K562 (cell line): ENCODE measurements at regions of chr1 and their contacts with region 1.

Region 1: DNA sequence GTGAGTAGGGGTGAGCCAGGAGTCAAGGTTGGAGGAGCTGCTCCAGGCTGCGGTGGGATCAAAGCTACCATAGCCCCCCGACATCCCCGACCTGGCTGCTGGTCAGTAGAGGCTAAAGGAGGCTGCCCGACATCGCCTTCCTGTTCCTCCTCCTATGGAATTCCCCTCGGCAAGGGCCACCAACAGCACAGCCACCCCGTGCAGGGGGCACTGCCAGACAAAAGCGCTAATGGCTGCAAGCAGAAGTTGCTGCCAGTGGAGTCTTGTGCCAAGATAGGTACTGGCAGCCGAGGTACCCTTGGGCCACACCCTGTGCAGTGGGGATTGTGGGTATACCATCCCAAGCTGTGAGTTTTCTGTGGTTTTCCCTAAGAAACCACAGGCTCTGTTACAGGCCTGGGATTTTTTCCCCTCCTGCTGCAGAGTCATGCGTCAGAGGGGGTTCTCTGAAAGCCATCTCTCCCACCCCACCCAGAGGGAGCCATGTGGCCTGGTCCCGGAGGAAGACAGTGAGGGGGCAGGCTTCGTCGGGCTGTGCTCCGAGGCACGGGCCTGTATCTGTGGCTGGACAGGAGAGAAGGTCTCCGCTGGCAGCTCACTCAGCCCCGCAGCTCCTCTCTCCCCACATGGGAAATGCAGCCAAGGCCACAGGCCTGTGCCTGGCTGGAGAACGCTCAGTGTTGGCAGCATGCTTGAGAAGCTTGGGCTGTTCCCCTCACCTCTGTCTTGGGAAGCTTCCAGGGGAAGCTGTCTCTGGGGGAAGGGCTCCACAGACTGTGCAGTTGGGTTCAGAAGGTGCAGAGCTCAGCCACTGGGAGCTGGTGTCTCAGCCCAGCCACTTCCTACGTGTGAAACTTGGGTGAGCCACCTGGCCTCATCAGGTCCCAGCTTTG is 42.5 kb downstream of the NEK2 start:
- DNase-seq: no peak
- ATAC-seq: peak; percentile 6
- H3K4me3 ChIP-seq: no peak overlapping the region
- H3K27ac ChIP-seq: peak overlapping the region; percentile 54; the same call in 2 of the 3 replicates
- H3K4me1 ChIP-seq: peaks cover 35 to 42% of the 10 kb centered on the region in 2 experiments
- H3K27me3 ChIP-seq: no peaks in the 10 kb centered on the region
- CTCF ChIP-seq: no peak
- EP300 ChIP-seq: no peak
- POLR2A ChIP-seq: no peak
- RAD21 ChIP-seq: no peak

Region 2: DNA sequence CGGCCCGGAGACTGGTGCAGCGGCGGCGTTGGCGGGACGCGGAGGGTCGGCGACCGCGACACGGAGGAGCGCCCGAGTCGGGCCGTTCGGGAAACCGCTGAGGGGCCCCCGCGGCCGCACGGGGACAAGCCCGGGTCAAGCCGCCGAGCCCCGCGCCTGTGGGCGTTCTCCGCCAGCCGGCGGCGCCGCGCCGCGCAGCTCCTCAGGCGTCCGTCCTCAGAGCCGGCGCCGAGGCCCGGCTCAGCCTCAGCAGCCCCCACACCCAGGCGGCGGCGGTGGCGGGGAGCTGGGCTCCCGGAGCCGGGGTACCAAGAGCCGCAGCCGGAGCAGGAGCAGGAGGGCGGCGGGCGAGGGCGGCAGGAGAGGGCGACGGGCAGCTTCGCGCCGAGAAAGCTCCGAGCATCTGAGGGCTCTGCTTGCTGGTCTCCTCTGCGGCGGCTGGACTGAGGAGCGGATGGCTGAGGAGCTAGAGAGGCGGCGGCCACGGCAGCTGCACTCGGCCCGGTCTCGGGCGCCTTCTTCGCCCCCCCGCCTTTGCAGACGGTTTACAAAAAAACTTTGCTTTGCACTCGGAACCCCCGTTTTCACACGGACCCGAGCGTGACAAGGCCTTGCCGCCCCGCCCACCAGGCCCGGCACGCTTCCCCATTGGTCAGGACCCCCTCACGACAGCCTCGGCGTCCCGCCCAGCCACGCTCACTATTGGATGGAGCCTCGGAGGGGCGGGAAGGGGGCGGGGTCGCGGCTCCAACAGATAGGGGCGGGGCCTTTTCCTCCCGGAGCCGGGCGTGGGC is 54.0 kb before region 1 on chr1 and contains the start of gene SLC30A1:
- CTCF ChIA-PET with region 1: no interaction called
- POLR2A ChIA-PET with region 1: interaction called, 5 read pairs
- in situ Hi-C with region 1: no loop called
- intact Hi-C with region 1: loop called (anchors 1 kb)
- DNase-seq: peak; percentile 100
- ATAC-seq: peak; percentile 92
- H3K4me3 ChIP-seq: peak within 1 kb of the TSS; percentile 75
- H3K27ac ChIP-seq: peak within 1 kb of the TSS; percentile 84
- H3K4me1 ChIP-seq: peaks cover 26% of the 10 kb centered on the region in 2 experiments; a peak in 4 of 5 replicates
- H3K27me3 ChIP-seq: no peaks in the 10 kb centered on the region
- CTCF ChIP-seq: peak in 2 of 3 experiments; percentile 17 to 41; a peak in 1 of 6 replicates
- EP300 ChIP-seq: peak; percentile 23; the same call in 1 of the 2 replicates
- POLR2A ChIP-seq: peak; percentile 82
- RAD21 ChIP-seq: peak; percentile 17 to 31; a peak in 2 of 4 replicates
- polyA plus RNA-seq, gene SLC30A1: 4.1 to 4.2 TPM

Region 3: DNA sequence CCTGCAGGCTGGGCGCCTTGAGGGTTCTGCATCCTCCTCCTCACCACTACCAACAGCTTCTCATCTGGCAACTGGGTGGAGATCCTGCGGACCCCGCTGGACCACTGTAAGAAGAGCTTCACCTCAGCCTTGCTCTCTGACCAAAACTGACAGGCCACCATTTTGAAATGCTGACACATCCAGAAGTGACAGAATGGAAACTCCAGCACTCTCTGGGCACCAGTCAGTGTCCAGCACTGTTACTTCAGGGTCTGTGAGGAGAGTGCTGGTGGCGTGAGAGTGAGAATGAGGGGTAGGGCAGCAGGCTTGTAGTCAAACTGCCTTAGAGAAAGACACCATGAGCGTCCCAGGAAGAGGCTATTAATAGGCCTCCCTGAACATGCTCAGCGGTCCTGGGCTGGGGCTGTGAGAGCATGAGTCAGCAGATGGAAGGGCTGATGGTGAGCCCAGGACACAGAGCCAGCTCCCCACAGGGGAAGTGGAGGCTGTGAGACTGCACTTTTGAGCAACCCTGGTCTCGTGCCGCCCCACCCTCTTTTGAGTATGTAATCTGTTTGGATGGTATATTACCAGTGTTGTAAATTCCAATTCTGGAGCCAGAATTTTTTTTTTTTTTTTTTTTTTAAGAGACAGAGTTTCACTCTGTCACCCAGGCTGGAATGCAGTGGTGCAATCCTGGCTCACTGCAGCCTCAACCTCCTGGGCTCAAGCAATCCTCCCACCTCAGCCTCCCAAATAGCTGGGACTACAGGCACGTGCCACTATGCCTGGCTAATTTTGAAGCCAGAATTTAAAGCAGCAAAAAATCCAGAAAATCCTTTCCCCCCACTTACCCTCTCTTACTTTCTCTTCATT is 19.6 kb before region 1 on chr1:
- CTCF ChIA-PET with region 1: no interaction called
- POLR2A ChIA-PET with region 1: interaction called, 10 read pairs
- in situ Hi-C with region 1: no loop called
- intact Hi-C with region 1: loop called (anchors 2 kb)
- DNase-seq: peak; percentile 88 to 98 (median 91)
- ATAC-seq: peak; percentile 91
- H3K4me3 ChIP-seq: no peak overlapping the region
- H3K27ac ChIP-seq: peak overlapping the region; percentile 96
- H3K4me1 ChIP-seq: peaks cover 61 to 63% of the 10 kb centered on the region in 2 experiments
- H3K27me3 ChIP-seq: no peaks in the 10 kb centered on the region; a peak in 1 of 5 replicates
- CTCF ChIP-seq: no peak
- EP300 ChIP-seq: peak; percentile 89
- POLR2A ChIP-seq: peak; percentile 80
- RAD21 ChIP-seq: peak; percentile 5 to 10; a peak in 2 of 4 replicates

Region 4: GRCh38 chr1:211643324-211644212 is 10.7 kb after region 1 on chr1:
- CTCF ChIA-PET with region 1: no interaction called
- POLR2A ChIA-PET with region 1: interaction called, 19 read pairs
- in situ Hi-C with region 1: no loop called
- intact Hi-C with region 1: no loop called
- DNase-seq: peak; percentile 46 to 72 (median 59)
- ATAC-seq: peak; percentile 83
- H3K4me3 ChIP-seq: no peak overlapping the region
- H3K27ac ChIP-seq: no peak overlapping the region
- H3K4me1 ChIP-seq: peaks cover 10 to 13% of the 10 kb centered on the region in 2 experiments; a peak in 4 of 5 replicates
- H3K27me3 ChIP-seq: no peaks in the 10 kb centered on the region
- CTCF ChIP-seq: no peak
- EP300 ChIP-seq: no peak
- POLR2A ChIP-seq: no peak
- RAD21 ChIP-seq: 0 out of 4 replicates have a peak, but pooled peaks of 1 of the 2 experiments have one; percentile 16

Region 5: GRCh38 chr1:212247179-212247721 is 614.4 kb after region 1 on chr1:
- CTCF ChIA-PET with region 1: no interaction called
- POLR2A ChIA-PET with region 1: no interaction called
- in situ Hi-C with region 1: no loop called
- intact Hi-C with region 1: no loop called
- DNase-seq: peak in 3 of 4 experiments; percentile 22 to 53 (median 44)
- ATAC-seq: peak; percentile 54
- H3K4me3 ChIP-seq: no peak overlapping the region
- H3K27ac ChIP-seq: no peak overlapping the region
- H3K4me1 ChIP-seq: peaks cover 6 to 24% of the 10 kb centered on the region in 2 experiments; a peak in 4 of 5 replicates
- H3K27me3 ChIP-seq: no peaks in the 10 kb centered on the region
- CTCF ChIP-seq: no peak
- EP300 ChIP-seq: no peak
- POLR2A ChIP-seq: no peak
- RAD21 ChIP-seq: 0 out of 4 replicates have a peak, but pooled peaks of 1 of the 2 experiments have one; percentile 16